BJ (cell line): ENCODE measurements at regions of chr14 and their contacts with region 1.

Region 1: GRCh38 chr14:104563742-104564615 is 15.6 kb upstream of the C14orf180 start:
- DNase-seq: no peak
- H3K4me3 ChIP-seq: no peak overlapping the region
- H3K27me3 ChIP-seq: no peaks in the 10 kb centered on the region
- CTCF ChIP-seq: peak; percentile 86

Region 2: GRCh38 chr14:104130974-104131651 is 432.9 kb before region 1 on chr14:
- CTCF ChIA-PET with region 1: interaction called, 15 read pairs
- POLR2A ChIA-PET with region 1: no interaction called
- DNase-seq: no peak
- H3K4me3 ChIP-seq: no peak overlapping the region
- H3K27me3 ChIP-seq: peaks cover 6% of the 10 kb centered on the region
- CTCF ChIP-seq: peak; percentile 47

Region 3: GRCh38 chr14:104137297-104138097 is 426.5 kb before region 1 on chr14:
- CTCF ChIA-PET with region 1: interaction called, 28 read pairs
- POLR2A ChIA-PET with region 1: no interaction called
- DNase-seq: no peak
- H3K4me3 ChIP-seq: peak overlapping the region; percentile 28
- H3K27me3 ChIP-seq: peaks cover 25% of the 10 kb centered on the region
- CTCF ChIP-seq: peak; percentile 54

Region 4: GRCh38 chr14:104576232-104576969 is 12.4 kb after region 1 on chr14:
- CTCF ChIA-PET with region 1: interaction called, 26 read pairs
- POLR2A ChIA-PET with region 1: no interaction called
- DNase-seq: no peak
- H3K4me3 ChIP-seq: no peak overlapping the region
- H3K27me3 ChIP-seq: no peaks in the 10 kb centered on the region
- CTCF ChIP-seq: no peak